A549 (cell line): ENCODE measurements at regions of chr17 and their contacts with region 1.

Region 1: DNA sequence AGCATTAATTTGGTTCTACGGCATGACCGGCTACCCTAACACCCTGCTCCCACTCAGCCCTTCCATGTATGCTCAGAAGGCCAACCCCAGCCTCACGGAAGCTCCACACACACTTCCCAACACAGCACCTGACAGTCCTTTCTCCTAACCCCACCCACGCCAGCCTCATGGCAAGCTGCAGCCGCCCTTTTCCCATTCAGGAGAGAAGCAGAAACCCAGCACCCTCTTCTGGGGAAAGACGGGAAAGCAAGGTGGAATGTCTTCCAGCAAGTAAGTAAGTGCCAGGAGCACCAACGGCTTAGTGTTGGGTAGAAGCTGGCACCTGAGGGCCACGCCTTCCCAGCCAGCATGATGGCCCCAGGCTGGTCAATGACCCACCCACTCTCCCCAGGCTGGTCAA is 32.1 kb downstream of the ABR start:
- DNase-seq: peak; percentile 87 to 88
- ATAC-seq: peak; percentile 86 to 92
- H3K4me3 ChIP-seq: no peak overlapping the region
- H3K27ac ChIP-seq: peak overlapping the region in 1 of 2 experiments; percentile 39; a peak in 2 of 6 replicates
- H3K4me1 ChIP-seq: 0 out of 3 replicates have a peak, but pooled peaks cover 5% of the 10 kb centered on the region
- CTCF ChIP-seq: peak; percentile 74
- EP300 ChIP-seq: no peak
- POLR2A ChIP-seq: no peak
- RAD21 ChIP-seq: peak; percentile 86 to 93

Region 2: DNA sequence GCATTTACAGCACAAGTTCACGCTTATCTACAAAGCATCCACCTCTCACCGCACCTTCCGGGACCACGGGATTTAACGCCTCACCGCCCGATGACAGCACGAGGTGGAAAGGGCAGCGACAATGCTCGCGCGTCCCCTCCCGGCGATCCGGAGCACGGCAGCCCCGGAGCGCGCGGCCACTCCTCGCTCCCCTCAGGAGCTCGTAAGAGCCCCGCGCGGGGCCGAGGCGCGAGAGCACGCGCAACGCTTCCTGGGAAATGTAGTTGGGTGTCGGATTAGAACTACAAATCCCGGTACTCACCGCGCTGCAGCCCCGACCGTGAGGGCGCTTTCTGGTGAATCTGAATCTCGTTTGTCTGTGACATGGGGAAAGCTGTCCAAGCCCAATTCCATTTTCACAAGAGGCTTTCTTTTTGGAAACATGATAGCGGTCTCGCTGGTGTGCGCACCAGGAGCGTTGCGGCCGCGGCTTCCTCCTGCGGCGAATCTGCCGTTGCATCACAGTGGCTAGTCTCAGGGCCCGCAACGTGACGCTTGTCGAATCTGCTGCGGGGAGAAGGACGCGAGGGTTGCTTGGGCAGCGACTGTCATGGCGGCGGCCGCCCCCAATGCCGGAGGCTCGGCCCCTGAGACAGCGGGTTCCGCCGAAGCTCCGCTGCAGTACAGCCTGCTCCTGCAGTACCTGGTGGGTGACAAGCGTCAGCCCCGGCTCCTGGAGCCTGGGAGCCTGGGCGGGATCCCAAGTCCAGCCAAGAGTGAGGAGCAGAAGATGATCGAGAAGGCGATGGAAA is 150.9 kb before region 1 on chr17 and contains the start of gene TIMM22:
- CTCF ChIA-PET with region 1: no interaction called
- POLR2A ChIA-PET with region 1: no interaction called
- DNase-seq: peak; percentile 98 to 100
- ATAC-seq: peak; percentile 97 to 98
- H3K4me3 ChIP-seq: peak within 1 kb of the TSS; percentile 88
- H3K27ac ChIP-seq: peak within 1 kb of the TSS; percentile 84 to 93
- H3K4me1 ChIP-seq: peaks cover 24% of the 10 kb centered on the region
- CTCF ChIP-seq: peak; percentile 97
- EP300 ChIP-seq: no peak
- POLR2A ChIP-seq: peak; percentile 92
- RAD21 ChIP-seq: peak; percentile 95 to 97
- polyA plus RNA-seq, gene TIMM22: 14.7 and 15.8 TPM in 2 replicates

Region 3: GRCh38 chr17:1108861-1109605 is 38.6 kb before region 1 on chr17:
- CTCF ChIA-PET with region 1: interaction called, 24 read pairs
- POLR2A ChIA-PET with region 1: no interaction called
- DNase-seq: peak; percentile 48 to 66
- ATAC-seq: peak; percentile 39 to 40
- H3K4me3 ChIP-seq: peak overlapping the region; percentile 80
- H3K27ac ChIP-seq: peak overlapping the region; percentile 98 to 99
- H3K4me1 ChIP-seq: peaks cover 45% of the 10 kb centered on the region
- CTCF ChIP-seq: no peak
- EP300 ChIP-seq: no peak
- POLR2A ChIP-seq: peak; percentile 45
- RAD21 ChIP-seq: no peak

Region 4: DNA sequence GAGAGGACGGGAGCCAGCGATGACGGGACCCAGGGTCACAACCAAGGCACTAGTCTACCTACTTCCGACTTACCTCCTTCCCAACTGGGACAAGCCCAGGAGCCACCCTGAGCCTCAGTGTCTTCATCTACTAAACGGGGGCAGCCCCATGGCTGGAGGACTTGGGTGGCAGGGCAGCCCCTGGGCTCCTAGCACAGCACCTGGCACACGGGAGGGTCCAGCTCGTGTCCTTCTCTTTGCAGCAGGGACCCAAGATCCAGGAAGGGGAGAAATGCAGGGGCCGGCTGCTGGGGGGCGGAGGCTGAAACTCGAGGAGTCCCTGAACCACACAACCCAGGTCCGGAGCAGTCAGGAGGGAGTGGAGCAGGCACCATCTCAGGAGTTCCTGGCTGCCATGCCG is 31.1 kb before region 1 on chr17:
- CTCF ChIA-PET with region 1: interaction called, 335 read pairs
- POLR2A ChIA-PET with region 1: no interaction called
- DNase-seq: no peak
- ATAC-seq: no peak
- H3K4me3 ChIP-seq: no peak overlapping the region
- H3K27ac ChIP-seq: peak overlapping the region; percentile 27 to 99; a peak in 4 of 6 replicates
- H3K4me1 ChIP-seq: peaks cover 34% of the 10 kb centered on the region
- CTCF ChIP-seq: no peak
- EP300 ChIP-seq: no peak
- POLR2A ChIP-seq: no peak
- RAD21 ChIP-seq: no peak

Region 5: GRCh38 chr17:1137465-1137894 is 10.2 kb before region 1 on chr17:
- CTCF ChIA-PET with region 1: interaction called, 47 read pairs
- POLR2A ChIA-PET with region 1: interaction called, 5 read pairs
- DNase-seq: peak; percentile 79 to 94
- ATAC-seq: peak; percentile 63 to 69; a peak in 5 of 6 replicates
- H3K4me3 ChIP-seq: peak overlapping the region; percentile 42
- H3K27ac ChIP-seq: peak overlapping the region; percentile 67 to 83
- H3K4me1 ChIP-seq: no peaks in the 10 kb centered on the region
- CTCF ChIP-seq: no peak
- EP300 ChIP-seq: no peak
- POLR2A ChIP-seq: peak; percentile 58
- RAD21 ChIP-seq: no peak

Region 6: DNA sequence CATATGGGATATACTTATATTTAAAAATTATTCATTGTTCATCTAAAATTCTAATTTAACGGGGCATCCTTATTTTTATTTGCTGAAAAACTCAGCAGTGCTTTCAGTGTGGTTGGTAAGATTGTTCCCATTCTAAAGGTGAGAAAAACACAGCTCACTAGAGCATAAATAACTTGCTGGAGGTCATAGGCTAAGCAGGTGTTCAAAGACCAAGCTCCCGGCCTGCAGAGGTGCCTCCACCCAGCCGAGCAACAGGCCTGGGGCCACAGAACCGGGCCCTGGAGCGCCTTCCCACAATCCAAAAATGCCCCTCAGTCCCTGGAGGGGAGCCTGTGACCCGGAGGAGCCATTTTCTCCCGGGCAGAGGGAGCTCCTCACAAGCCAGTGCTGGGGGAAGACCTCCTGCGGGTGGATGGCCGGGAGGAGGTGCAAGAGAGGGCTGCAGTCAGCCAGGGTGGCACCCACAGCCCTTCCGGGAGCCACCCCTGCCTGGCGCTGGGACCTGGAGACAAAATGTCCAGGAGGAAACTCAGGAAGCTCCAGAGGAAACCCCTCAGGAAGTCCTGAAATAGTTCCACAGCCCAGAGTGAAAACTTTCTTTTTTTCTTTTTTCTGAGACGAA is 17.4 kb after region 1 on chr17:
- CTCF ChIA-PET with region 1: interaction called, 20 read pairs
- POLR2A ChIA-PET with region 1: no interaction called
- DNase-seq: no peak
- ATAC-seq: peak; percentile 16 to 48; a peak in 3 of 6 replicates
- H3K4me3 ChIP-seq: no peak overlapping the region
- H3K27ac ChIP-seq: no peak overlapping the region
- H3K4me1 ChIP-seq: no peaks in the 10 kb centered on the region
- CTCF ChIP-seq: no peak
- EP300 ChIP-seq: no peak
- POLR2A ChIP-seq: no peak
- RAD21 ChIP-seq: no peak

Region 7: DNA sequence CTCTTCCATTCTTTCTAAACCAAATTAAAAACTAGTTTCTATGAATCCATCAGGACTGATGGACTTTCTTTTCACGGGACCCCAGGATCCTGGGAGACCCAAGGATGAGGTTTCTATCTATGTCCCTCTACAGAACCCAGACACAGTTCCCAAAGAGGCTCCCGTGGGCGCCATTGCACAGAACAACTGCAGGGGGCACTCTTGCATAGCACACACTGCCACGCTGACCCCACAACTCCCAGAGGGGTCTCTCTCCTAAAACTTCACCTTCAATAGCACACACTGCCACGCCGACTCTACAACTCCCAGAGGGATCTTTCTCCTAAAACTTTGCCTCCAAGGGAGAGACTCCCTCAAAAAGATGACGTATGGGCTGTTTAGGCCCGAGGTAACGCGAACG is 23.1 kb after region 1 on chr17:
- CTCF ChIA-PET with region 1: interaction called, 20 read pairs
- POLR2A ChIA-PET with region 1: no interaction called
- DNase-seq: no peak
- ATAC-seq: no peak
- H3K4me3 ChIP-seq: no peak overlapping the region
- H3K27ac ChIP-seq: no peak overlapping the region
- H3K4me1 ChIP-seq: no peaks in the 10 kb centered on the region
- CTCF ChIP-seq: peak; percentile 26; the same call in 2 of the 3 replicates
- EP300 ChIP-seq: no peak
- POLR2A ChIP-seq: no peak
- RAD21 ChIP-seq: peak in 1 of 2 experiments; percentile 46; a peak in 2 of 5 replicates